ENCODE measurements at regions of chr16 and their contacts with region 1.

Region 1: GRCh38 chr16:56519459-56520250 is at the start of gene BBS2:
- DNase-seq: peak; percentile 93 to 96 (median 95)
- ATAC-seq: peak; percentile 98
- H3K4me3 ChIP-seq: peak within 1 kb of the TSS; percentile 78
- H3K4me1 ChIP-seq: peaks cover 4% of the 10 kb centered on the region
- CTCF ChIP-seq: no peak
- total RNA-seq, gene BBS2: 26.9 to 33.4 (median 30.2) TPM

Region 2: DNA sequence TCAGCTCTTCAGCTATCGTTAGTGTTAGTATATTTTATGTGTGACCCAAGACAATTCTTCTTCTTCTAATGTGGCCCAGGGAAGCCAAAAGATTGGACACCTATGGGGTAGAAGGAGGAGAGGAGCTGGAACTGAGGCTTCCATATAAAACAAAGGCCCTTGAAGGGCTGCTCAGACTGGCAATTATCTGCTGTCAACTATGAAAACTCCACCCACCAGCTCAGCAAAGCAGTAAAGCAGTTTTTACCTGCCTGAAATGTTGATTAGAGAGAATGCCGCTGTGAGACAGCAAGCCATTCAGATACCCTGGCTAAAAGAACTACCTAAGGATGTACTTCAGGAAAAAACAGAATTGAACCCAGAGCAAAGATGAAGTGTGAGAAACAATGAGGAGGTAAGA is 374.3 kb before region 1 on chr16:
- intact Hi-C with region 1: no loop called
- DNase-seq: no peak
- ATAC-seq: no peak
- H3K4me3 ChIP-seq: no peak overlapping the region
- H3K4me1 ChIP-seq: no peaks in the 10 kb centered on the region
- CTCF ChIP-seq: no peak

Region 3: GRCh38 chr16:56409195-56409594 is 110.5 kb before region 1 on chr16:
- intact Hi-C with region 1: no loop called
- DNase-seq: no peak
- ATAC-seq: peak; percentile 49
- H3K4me3 ChIP-seq: no peak overlapping the region
- H3K4me1 ChIP-seq: peaks cover 12% of the 10 kb centered on the region
- CTCF ChIP-seq: no peak

Region 4: GRCh38 chr16:56558024-56558747 is 38.5 kb after region 1 on chr16:
- intact Hi-C with region 1: no loop called
- DNase-seq: no peak
- ATAC-seq: peak; percentile 18
- H3K4me3 ChIP-seq: no peak overlapping the region
- H3K4me1 ChIP-seq: no peaks in the 10 kb centered on the region
- CTCF ChIP-seq: no peak

Region 5: GRCh38 chr16:56608043-56608875 is 88.6 kb after region 1 on chr16 and contains the start of gene MT2A:
- intact Hi-C with region 1: loop called in 1 of 2 experiments (anchors 10 kb)
- DNase-seq: peak; percentile 96 to 98 (median 97)
- ATAC-seq: peak; percentile 92
- H3K4me3 ChIP-seq: peak within 1 kb of the TSS; percentile 0
- H3K4me1 ChIP-seq: peaks cover 20% of the 10 kb centered on the region
- CTCF ChIP-seq: no peak
- total RNA-seq, gene MT2A: 100.0 to 211 (median 206) TPM